ENCODE measurements at regions of chr19 and their contacts with region 1.

Region 1: DNA sequence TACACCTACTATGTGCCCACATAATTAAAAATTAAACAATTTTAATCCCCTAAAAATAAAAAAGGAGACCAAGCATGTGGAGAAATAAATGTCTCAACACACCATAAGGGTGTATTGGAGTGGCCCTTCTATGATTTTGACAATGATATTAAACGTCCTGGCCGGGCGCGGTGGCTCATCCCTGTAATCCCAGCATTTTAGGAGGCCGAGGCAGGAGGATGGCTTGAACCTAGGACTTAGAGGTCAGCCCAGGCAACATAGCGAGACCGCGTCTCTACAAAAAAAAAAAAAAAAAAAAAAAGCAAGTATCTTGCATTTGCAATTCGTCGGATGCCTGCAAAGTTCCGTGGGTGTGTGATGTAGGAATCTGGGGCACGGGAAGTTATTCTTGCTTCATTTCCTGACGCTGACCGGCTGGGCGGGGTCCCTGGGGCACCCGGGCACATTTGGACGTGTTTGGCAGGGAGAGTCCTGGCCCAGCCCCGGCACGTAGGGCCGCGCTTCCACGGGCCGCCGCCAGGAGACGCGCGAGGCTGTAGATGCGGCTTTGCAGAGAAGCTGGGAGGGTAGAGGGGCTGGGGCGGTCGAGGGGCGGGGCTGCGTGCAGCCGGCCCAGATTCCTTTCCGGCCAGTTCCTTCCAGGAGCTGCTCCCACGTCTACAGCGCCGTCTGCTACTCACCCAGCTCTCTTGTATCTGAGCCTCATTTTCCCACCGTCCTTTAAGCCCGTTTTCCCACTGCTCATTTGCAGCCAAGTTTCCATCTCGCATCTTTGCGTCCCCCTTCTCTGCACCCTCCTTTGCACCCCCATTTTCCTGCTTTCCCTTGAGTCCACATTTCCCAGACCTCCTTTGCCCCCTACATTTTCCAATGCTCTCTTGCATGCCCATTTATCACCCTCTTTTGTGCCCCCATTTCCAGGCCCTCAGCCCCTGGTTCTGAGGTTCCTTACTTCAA is 2.2 kb upstream of the TSPAN16 start:
- DNase-seq: peak; percentile 19
- H3K4me3 ChIP-seq: peak overlapping the region in 3 of 4 donors; percentile 26 to 37 (median 28)
- H3K27ac ChIP-seq: peak overlapping the region in 3 of 4 donors; percentile 46 to 75 (median 66)
- H3K4me1 ChIP-seq: peaks cover 0 to 28% (median 4%) of the 10 kb centered on the region in 3 donors
- H3K27me3 ChIP-seq: no peaks in the 10 kb centered on the region
- CTCF ChIP-seq: peak; percentile 96 to 99 (median 99)
- POLR2A ChIP-seq: no peak

Region 2: DNA sequence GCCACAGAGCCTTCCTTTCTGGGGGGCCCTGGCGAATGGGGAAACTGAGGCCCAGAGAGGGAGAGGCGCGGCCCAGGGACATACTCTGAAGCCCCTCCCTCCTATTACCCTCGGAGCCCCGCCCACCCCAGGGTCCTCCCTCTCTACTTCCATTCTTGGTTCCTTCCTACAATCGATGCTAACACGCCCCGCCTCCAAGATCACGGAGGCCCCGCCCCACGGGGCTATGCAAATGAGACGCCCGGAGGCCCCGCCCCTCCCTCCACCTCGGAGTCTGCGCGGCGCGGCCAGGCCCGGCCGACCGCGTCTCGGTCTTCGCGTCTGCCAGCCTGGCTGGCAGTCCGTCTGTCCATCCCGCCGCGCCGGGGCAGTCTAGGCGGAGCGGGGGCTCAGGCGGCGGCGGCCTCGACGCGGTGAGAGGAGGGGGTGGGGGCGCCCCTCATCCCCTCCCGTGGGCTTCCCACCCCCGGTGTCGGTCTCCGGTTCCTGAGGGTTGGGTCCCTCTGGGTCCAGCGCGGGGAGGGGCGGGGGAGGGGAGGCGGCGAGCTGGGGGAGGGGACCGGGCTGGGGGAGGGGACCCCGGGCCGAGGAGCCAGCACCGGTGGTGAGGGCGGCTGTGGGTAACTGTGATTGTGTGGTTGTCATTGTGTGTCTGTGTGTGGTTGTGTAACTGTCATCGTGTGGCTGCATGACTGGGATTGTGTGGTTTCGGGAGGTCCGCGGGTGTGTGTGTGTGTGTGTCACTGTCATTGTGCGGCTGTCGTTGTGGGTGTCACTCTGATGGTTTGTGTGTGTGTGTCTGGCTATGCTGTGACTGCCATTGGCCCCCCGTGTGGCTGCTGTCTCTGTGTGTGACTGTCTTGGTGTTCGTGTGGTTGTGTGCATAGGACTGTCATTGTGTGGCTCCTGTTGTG is 61.7 kb after region 1 on chr19 and contains the start of gene PLPPR2:
- intact Hi-C with region 1: no loop called
- DNase-seq: peak; percentile 52
- H3K4me3 ChIP-seq: peak within 1 kb of the TSS; percentile 55 to 78 (median 66)
- H3K27ac ChIP-seq: peak within 1 kb of the TSS; percentile 69 to 80 (median 74)
- H3K4me1 ChIP-seq: peaks cover 0 to 34% (median 3%) of the 10 kb centered on the region in 3 donors
- H3K27me3 ChIP-seq: no peaks in the 10 kb centered on the region
- CTCF ChIP-seq: no peak
- POLR2A ChIP-seq: peak in 2 of 4 donors; percentile 54 to 69
- total RNA-seq, gene PLPPR2: 5.1 to 14.2 (median 9.7) TPM

Region 3: GRCh38 chr19:11380653-11381534 is 87.2 kb after region 1 on chr19:
- intact Hi-C with region 1: loop called (anchors 5 kb)
- DNase-seq: peak; percentile 75
- H3K4me3 ChIP-seq: peak overlapping the region; percentile 41 to 84 (median 62)
- H3K27ac ChIP-seq: peak overlapping the region; percentile 83 to 93 (median 88)
- H3K4me1 ChIP-seq: peaks cover 32 to 77% (median 63%) of the 10 kb centered on the region in 3 donors
- H3K27me3 ChIP-seq: peaks cover 0 to 30% (median 2%) of the 10 kb centered on the region in 4 donors
- CTCF ChIP-seq: peak; percentile 73 to 85 (median 82)
- POLR2A ChIP-seq: peak in 3 of 4 donors; percentile 50 to 84 (median 84)

Region 4: GRCh38 chr19:11446652-11447301 is 153.1 kb after region 1 on chr19:
- intact Hi-C with region 1: loop called (anchors 10 kb)
- DNase-seq: no peak
- H3K4me3 ChIP-seq: no peak overlapping the region
- H3K27ac ChIP-seq: no peak overlapping the region
- H3K4me1 ChIP-seq: peaks cover 0 to 18% (median 2%) of the 10 kb centered on the region in 3 donors
- H3K27me3 ChIP-seq: no peaks in the 10 kb centered on the region
- CTCF ChIP-seq: peak; percentile 33 to 79 (median 67)
- POLR2A ChIP-seq: no peak